Activated T-helper 2 cell treated with anti-CD3 and anti-CD28 coated beads, Interferon-gamma antibody, Interleukin-2, Interleukin-4, amounts not matched to agents 10 μg/mL and 5 μg/mL and 100 μg/mL, durations not matched to agents 14 hours and 24 hours and 36 hours (primary cell): ENCODE measurements at regions of chr1 and their contacts with region 1.

Region 1: GRCh38 chr1:116570358-116571200 is at the start of gene CD58:
- DNase-seq: peak; percentile 78
- H3K4me3 Mint-ChIP-seq: peak within 1 kb of the TSS; percentile 97
- H3K27ac Mint-ChIP-seq: peak within 1 kb of the TSS; percentile 91
- H3K4me1 Mint-ChIP-seq: peaks cover 65% of the 10 kb centered on the region
- H3K27me3 Mint-ChIP-seq: no peaks in the 10 kb centered on the region
- total RNA-seq, gene CD58: 40.6 and 40.9 TPM in 2 replicates

Region 2: GRCh38 chr1:116433275-116434257 is 137.0 kb before region 1 on chr1:
- intact Hi-C with region 1: no loop called
- DNase-seq: no peak
- H3K4me3 Mint-ChIP-seq: no peak overlapping the region
- H3K27ac Mint-ChIP-seq: no peak overlapping the region
- H3K4me1 Mint-ChIP-seq: no peaks in the 10 kb centered on the region
- H3K27me3 Mint-ChIP-seq: peaks cover 16% of the 10 kb centered on the region

Region 3: DNA sequence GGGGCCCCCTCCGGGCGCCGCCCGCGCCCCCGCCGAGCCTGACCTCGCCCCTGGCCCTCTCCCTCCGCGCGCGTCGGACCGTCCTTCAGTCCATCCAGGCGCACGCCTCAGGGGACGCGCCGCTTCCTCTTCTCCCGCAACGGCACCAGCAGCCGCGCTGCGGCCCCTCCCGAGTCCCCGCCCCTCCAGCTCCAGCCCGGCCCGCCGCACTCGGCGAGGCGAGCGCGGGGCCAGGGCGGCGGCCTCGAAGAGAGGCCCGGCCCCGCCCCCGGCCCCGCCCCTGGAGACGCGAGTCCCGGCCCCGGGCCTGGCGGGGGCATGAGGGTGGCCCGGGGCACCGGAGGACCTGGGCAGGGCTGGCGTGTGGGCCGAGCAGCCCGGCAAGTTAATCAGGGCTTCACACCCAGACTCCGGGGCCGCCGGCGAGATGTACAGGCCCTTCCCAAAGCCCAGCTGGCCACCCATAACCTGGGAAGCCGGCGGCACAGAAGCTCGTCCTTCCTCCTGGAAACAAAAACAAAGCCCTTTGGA is 97.1 kb after region 1 on chr1 and contains the start of gene IGSF3:
- intact Hi-C with region 1: loop called (anchors 2 kb)
- DNase-seq: peak; percentile 47
- H3K4me3 Mint-ChIP-seq: peak within 1 kb of the TSS; percentile 78
- H3K27ac Mint-ChIP-seq: no peak within 1 kb of the TSS
- H3K4me1 Mint-ChIP-seq: peaks cover 13% of the 10 kb centered on the region
- H3K27me3 Mint-ChIP-seq: peaks cover 52% of the 10 kb centered on the region
- total RNA-seq, gene IGSF3: 4.6 and 4.9 TPM in 2 replicates

Region 4: DNA sequence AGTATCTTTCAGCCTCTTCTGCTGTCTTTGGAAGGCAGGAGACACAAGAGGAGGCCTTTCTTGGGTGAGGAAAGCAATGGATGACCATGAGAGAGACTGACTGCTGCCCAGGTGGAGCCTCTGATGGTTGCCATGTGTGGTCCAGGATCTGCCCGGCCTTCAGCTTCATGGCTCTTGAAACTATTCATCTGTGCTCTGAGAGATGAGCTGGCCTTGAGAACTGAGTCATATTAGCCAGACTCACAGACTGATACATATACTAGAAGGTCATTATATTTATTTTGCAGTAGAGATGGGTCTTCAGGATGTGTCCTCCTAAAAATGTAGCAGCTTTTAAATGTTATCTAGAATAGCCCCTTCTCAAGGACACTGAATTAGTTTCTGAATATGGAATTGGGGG is 372.9 kb after region 1 on chr1:
- intact Hi-C with region 1: no loop called
- DNase-seq: no peak
- H3K4me3 Mint-ChIP-seq: no peak overlapping the region
- H3K27ac Mint-ChIP-seq: peak overlapping the region; percentile 53
- H3K4me1 Mint-ChIP-seq: peaks cover 25% of the 10 kb centered on the region
- H3K27me3 Mint-ChIP-seq: no peaks in the 10 kb centered on the region